HAP-1 (cell line): ENCODE measurements at regions of chr12 and their contacts with region 1.

Region 1: GRCh38 chr12:2583091-2583497 is 211.7 kb upstream of the FKBP4 start:
- DNase-seq: peak; percentile 28 to 82
- H3K4me3 ChIP-seq: no peak overlapping the region
- H3K4me1 ChIP-seq: no peaks in the 10 kb centered on the region
- H3K27me3 ChIP-seq: peaks cover 16% of the 10 kb centered on the region; the same call in 1 of the 2 replicates

Region 2: DNA sequence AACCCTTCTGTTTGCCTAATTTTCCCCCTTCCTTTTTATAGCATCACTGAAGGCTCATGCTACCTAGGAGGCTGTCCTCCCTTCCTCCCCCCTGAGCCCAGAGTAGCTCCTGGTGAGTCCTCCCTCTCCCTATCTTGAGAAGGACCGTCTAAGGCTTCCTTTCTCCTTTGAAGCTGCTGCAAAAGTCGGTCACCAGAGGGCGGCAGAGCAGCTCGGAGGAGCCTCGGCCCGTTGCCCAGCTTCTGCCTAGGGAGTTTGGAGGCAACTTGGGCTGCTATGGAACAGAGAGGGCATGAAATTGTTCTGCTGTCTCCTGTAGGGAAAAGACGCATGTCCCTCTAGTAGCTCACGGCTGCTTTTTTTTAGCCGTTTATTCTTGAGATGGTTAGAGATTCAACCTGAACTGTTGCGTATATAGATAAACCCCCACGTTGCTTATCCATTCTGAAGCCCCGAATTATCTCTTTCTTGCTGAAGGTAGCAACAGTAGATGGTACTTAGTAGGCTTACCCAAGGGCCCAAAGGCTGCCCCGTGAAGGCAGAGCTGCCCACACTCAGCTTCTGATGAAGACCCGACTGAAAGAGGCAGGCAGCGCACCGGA is 948.4 kb before region 1 on chr12:
- in situ Hi-C with region 1: loop called (anchors 25 kb)
- DNase-seq: peak; percentile 56 to 85
- H3K4me3 ChIP-seq: no peak overlapping the region
- H3K4me1 ChIP-seq: peaks cover 6% of the 10 kb centered on the region; the same call in 1 of the 2 replicates
- H3K27me3 ChIP-seq: no peaks in the 10 kb centered on the region; the same call in 1 of the 2 replicates

Region 3: DNA sequence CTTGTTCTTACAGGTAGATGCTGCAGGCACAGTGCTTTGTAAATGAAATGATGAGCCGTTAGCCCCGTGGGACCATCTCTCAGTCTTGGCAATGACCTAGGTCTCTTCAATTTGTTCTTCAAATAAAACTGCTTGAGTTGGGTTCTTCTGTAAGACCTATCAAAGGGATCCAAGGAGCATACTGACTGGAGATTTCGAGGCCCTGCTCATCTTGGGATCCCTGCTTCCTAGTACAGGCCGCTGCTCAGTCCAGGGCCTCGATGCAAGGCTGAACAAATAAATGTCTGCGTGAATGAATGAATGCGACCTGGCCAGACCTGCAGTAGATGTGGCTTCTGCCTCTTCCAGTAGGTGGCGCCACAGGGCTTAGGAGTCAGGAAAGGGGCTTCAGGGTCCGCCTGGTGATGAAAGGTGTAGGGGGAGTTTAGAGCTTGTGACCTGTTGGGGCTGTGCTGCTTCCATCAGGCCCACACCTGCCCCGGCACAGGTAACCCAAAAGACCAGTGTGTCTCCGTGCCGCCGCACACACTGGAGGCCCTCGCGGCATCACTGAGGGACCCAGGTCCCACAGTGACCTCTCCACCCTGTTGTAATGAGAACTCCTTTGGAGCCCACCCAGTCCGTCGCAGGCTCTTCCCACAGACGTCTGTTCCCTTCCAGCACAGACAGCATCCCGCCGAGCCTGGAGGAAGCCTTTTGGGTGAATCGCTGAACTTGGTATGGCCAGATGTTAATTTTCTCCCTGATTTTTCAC is 525.9 kb before region 1 on chr12:
- in situ Hi-C with region 1: loop called (anchors 10 kb)
- DNase-seq: peak; percentile 25 to 84
- H3K4me3 ChIP-seq: no peak overlapping the region
- H3K4me1 ChIP-seq: no peaks in the 10 kb centered on the region; the same call in none of the 2 replicates
- H3K27me3 ChIP-seq: peaks cover 56% of the 10 kb centered on the region